Activated naive CD4-positive, alpha-beta T cell treated with anti-CD3 and anti-CD28 coated beads for 36 hours (primary cell): ENCODE measurements at regions of chr10 and their contacts with region 1.

Region 1: DNA sequence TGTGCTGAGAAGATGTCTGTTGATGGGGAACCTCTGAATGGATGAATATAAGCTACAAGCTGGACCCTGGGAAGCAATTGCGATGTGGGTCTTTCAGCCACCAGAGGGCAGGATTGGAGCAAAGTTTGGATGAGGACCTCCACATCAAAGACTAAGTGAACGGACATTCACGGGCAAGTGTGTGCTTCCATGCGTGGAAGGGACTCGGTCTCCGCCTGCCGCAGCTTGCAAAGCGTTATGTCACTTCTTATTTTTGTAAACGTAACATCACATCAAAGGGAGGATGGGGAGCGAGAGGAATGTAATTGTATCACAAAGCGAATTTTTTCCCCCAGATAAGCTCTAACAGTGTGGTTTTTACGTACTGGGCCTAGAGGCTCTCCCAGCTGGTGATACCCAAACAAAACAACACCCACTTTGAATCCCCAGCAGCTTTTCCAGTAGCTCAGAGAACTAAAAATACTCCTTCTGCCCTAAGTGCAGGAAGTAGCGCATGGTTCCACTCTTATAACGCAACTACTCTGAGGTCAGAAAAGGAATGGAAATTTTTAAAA is 65.0 kb downstream of the VWA2 start:
- DNase-seq: peak; percentile 90
- H3K4me3 Mint-ChIP-seq: peak overlapping the region; percentile 81
- H3K27ac Mint-ChIP-seq: no peak overlapping the region
- H3K4me1 Mint-ChIP-seq: peaks cover 3% of the 10 kb centered on the region
- H3K27me3 Mint-ChIP-seq: no peaks in the 10 kb centered on the region

Region 2: DNA sequence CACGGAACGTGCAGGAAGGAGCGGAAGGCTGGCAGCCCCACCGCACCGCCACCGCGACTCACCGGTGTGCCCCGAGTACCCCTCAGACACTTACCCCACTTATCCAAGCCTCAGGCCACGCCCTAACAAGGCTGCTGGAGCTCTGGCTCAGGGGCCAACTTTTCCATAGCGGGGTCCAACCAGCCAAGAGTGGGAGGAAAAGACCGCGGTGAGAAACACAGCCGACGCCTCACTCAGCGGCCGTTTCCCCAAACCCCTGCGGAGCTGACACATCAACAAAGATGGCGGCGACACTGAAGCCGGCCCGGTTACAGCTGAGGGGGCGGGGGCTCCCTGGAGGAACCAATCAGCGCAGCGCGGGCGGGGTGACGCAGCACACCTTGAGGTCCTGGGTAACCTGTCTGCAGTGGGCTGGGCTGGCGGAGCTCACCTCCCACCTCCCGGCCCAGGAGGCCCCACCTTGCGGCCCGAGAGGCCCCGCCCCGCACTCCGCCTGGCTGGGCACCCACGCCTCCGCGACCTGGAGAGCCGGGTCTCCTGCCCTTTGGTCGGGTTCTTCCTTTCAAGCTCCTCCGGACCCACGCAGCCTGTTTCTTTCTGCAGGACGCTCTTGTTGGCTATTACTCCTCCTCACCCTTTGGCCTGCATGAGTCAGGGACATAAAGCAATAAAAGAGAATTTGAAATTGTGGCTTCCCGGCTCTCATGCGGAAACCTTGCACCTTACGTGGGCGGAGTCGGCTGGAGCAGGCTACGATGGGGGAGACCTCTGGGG is 130.0 kb before region 1 on chr10 and contains the start of gene CCDC186:
- CTCF ChIA-PET with region 1: interaction called, 4 read pairs
- intact Hi-C with region 1: loop called (anchors 1 kb)
- DNase-seq: peak; percentile 99
- H3K4me3 Mint-ChIP-seq: peak within 1 kb of the TSS; percentile 98
- H3K27ac Mint-ChIP-seq: peak within 1 kb of the TSS; percentile 93
- H3K4me1 Mint-ChIP-seq: peaks cover 27% of the 10 kb centered on the region
- H3K27me3 Mint-ChIP-seq: no peaks in the 10 kb centered on the region
- total RNA-seq, gene CCDC186: 10.3 to 13.7 TPM

Region 3: DNA sequence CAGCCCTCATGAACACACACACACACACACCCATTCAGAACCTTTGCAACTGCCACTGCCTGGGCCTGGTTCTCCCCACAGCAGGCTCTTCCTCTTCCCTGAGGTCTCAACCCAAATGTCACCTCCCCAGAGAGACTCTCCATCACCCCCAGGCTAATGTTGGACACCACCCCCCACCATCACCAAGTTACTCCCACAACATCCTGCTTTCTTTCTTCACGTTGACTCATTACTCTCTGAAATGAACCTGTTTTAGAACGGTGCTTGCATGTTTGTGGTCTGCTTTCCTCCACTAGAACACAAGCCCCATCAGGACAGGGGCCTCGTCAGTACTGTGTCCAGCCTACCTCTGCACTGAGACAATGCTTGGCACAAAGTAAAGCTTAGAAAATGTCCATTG is 84.2 kb after region 1 on chr10:
- CTCF ChIA-PET with region 1: interaction called, 10 read pairs
- intact Hi-C with region 1: no loop called
- DNase-seq: peak; percentile 17
- H3K4me3 Mint-ChIP-seq: no peak overlapping the region
- H3K27ac Mint-ChIP-seq: peak overlapping the region; percentile 2
- H3K4me1 Mint-ChIP-seq: peaks cover 6% of the 10 kb centered on the region
- H3K27me3 Mint-ChIP-seq: no peaks in the 10 kb centered on the region

Region 4: GRCh38 chr10:114458955-114459354 is 154.9 kb after region 1 on chr10:
- CTCF ChIA-PET with region 1: interaction called, 10 read pairs
- intact Hi-C with region 1: loop called (anchors 1 kb)
- DNase-seq: peak; percentile 57
- H3K4me3 Mint-ChIP-seq: no peak overlapping the region
- H3K27ac Mint-ChIP-seq: peak overlapping the region; percentile 2
- H3K4me1 Mint-ChIP-seq: peaks cover 18% of the 10 kb centered on the region
- H3K27me3 Mint-ChIP-seq: no peaks in the 10 kb centered on the region

Region 5: DNA sequence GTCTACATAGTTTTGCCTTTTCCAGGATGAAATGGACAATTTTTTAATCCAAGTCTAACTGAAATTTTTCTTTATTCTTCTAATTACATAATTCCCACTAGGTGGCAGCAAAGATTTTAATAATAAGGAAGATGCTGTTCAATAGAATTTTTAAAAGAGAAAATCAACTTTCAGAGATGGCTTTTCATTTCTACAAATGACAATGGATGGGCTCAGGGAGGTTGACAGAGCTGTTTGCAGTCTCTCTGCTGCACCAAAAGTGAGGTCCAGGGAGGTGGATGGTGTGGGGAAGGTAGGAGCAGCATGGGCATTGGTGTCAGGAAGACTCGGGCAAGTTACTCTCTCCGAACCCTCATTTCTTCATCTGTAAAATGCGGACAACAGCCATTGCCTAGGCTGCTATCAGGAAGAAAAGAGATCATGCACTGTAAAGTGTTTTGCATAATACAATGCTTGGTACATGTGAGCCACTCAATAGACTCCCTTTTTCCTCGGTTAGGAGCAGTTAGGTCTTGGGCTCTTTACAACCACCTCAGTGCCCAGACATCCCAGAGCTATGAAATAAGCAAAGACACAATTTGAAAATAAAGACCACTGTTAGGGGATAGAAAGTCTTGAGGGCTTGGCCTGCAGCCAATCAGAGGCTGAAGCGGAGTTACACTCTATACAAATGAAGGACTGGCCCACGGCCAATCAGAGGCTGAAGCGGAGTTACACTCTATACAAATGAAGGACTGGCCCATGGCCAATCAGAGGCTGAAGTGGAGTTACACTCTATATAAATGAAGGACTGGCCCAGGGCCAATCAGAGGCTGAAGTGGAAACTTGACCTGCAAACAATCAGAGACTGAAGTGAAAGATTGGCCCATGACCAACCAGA is 246.9 kb after region 1 on chr10:
- CTCF ChIA-PET with region 1: interaction called, 62 read pairs
- intact Hi-C with region 1: loop called (anchors 1 kb)
- DNase-seq: no peak
- H3K4me3 Mint-ChIP-seq: no peak overlapping the region
- H3K27ac Mint-ChIP-seq: no peak overlapping the region
- H3K4me1 Mint-ChIP-seq: peaks cover 18% of the 10 kb centered on the region
- H3K27me3 Mint-ChIP-seq: no peaks in the 10 kb centered on the region

Region 6: DNA sequence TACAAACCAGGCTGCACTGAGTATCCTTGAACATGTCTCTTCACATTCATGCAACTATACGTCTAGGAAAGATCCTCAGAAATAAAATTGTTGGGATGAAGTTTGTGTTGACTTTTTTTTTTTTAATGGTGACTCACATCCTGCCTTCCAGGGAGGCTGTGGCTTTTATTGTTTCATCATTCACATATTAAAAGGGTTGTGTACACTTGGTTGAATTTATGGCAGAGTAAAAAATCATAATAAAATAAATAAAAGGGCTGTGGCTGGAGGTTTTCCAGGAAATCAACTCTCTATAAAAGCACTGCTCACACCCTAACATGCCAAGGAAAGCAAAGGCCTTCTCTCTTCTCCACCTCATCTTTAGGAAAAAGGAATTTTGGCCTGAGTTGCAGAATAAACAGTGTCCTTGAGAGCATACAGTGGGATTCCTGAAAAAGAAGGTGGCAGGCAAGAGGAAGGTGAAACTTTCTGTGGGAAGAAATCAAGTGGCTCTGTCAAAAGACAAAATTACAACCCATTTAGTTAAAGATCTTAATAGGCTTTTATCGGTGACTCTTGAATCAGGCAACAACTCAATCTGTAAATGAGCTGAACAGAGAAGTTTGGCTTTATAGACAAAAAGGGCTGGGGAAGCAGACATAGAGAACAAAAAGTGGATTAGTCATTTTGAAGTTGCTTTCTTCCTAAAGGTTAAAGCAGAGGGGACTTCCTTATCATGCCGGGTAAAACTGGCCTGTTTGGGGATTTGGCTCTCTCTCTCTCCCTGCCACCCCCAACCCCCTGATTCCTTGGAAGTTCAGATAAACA is 475.9 kb after region 1 on chr10:
- CTCF ChIA-PET with region 1: interaction called, 30 read pairs
- intact Hi-C with region 1: no loop called
- DNase-seq: no peak
- H3K4me3 Mint-ChIP-seq: no peak overlapping the region
- H3K27ac Mint-ChIP-seq: no peak overlapping the region
- H3K4me1 Mint-ChIP-seq: peaks cover 2% of the 10 kb centered on the region
- H3K27me3 Mint-ChIP-seq: peaks cover 10% of the 10 kb centered on the region

Region 7: DNA sequence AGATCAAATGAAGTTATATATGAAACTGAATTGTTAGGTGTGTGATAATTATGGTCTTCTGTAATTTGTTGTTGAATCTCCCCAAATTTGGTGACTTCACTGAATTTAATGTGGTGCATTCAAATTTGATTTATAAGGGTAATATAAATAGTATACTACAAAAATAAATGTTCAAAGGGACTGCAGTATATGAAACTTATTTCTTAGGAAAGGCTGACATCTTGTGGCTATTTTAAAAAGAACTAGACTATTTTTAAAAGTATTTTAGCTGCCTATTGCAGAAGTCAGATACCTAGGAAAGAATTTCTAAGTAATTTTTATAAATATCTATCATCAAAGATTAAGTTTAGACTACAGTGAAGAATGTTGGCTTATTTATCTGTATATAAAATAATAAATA is 825.7 kb after region 1 on chr10:
- CTCF ChIA-PET with region 1: interaction called, 8 read pairs
- intact Hi-C with region 1: loop called (anchors 1 kb)
- DNase-seq: no peak
- H3K4me3 Mint-ChIP-seq: no peak overlapping the region
- H3K27ac Mint-ChIP-seq: no peak overlapping the region
- H3K4me1 Mint-ChIP-seq: no peaks in the 10 kb centered on the region
- H3K27me3 Mint-ChIP-seq: peaks cover 7% of the 10 kb centered on the region